T-cell (primary cell): ENCODE measurements at regions of chr12 and their contacts with region 1.

Region 1: GRCh38 chr12:113965951-113966797 is at the start of gene RBM19:
- DNase-seq: peak; percentile 93 to 99 (median 96)
- ATAC-seq: peak; percentile 97 to 99 (median 99)
- H3K4me3 ChIP-seq: peak within 1 kb of the TSS; percentile 89 to 99
- H3K4me3 Mint-ChIP-seq: peak within 1 kb of the TSS; percentile 93 to 99 (median 94)
- H3K27ac ChIP-seq: peak within 1 kb of the TSS; percentile 46
- H3K27ac Mint-ChIP-seq: peak within 1 kb of the TSS; percentile 84 to 92
- H3K4me1 ChIP-seq: peaks cover 9 to 18% of the 10 kb centered on the region in 2 experiments
- H3K4me1 Mint-ChIP-seq: peaks cover 46 to 55% (median 52%) of the 10 kb centered on the region in 3 donors
- H3K27me3 ChIP-seq: peaks cover 2 to 6% of the 10 kb centered on the region in 2 experiments
- H3K27me3 Mint-ChIP-seq: peaks cover 3 to 10% of the 10 kb centered on the region in 2 donors
- total RNA-seq, gene RBM19: 57.9 to 80.3 (median 78.3) TPM

Region 2: DNA sequence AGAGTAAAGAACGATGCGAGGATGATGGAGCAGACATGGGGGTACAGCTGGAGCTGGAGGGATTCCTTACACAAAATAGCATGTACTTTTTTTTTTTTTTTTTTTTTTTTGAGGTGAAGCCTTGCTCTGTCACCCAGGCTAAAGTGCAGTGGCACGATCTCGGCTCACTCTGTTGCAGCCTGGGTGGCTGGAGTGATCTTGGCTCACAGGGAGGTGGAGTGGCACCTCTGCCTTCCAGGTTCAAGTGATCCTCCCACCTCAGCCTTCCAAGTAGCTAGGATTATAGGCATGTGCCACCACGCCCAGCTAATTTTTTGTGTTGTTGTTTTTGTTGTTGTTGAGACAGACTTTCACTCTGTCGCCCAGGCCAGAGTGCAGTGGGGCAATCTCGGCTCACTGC is 825.5 kb before region 1 on chr12:
- CTCF ChIA-PET with region 1: no interaction called
- POLR2A ChIA-PET with region 1: interaction called in 1 of 2 experiments, 10 read pairs
- DNase-seq: no peak
- ATAC-seq: no peak
- H3K4me3 ChIP-seq: no peak overlapping the region
- H3K4me3 Mint-ChIP-seq: no peak overlapping the region
- H3K27ac ChIP-seq: no peak overlapping the region
- H3K27ac Mint-ChIP-seq: no peak overlapping the region
- H3K4me1 ChIP-seq: peaks cover 0 to 10% of the 10 kb centered on the region in 2 experiments
- H3K4me1 Mint-ChIP-seq: peaks cover 12 to 13% (median 12%) of the 10 kb centered on the region in 3 donors
- H3K27me3 ChIP-seq: peaks cover 0 to 26% of the 10 kb centered on the region in 2 experiments
- H3K27me3 Mint-ChIP-seq: peaks cover 0 to 4% of the 10 kb centered on the region in 2 donors

Region 3: GRCh38 chr12:114508529-114509129 is 542.5 kb after region 1 on chr12:
- CTCF ChIA-PET with region 1: interaction called, 6 to 18 read pairs
- POLR2A ChIA-PET with region 1: no interaction called
- DNase-seq: peak in 33 of 35 experiments; percentile 6 to 71 (median 38)
- ATAC-seq: peak in 3 of 4 experiments; percentile 41 to 55 (median 46)
- H3K4me3 ChIP-seq: no peak overlapping the region
- H3K4me3 Mint-ChIP-seq: no peak overlapping the region
- H3K27ac ChIP-seq: no peak overlapping the region
- H3K27ac Mint-ChIP-seq: no peak overlapping the region
- H3K4me1 ChIP-seq: no peaks in the 10 kb centered on the region
- H3K4me1 Mint-ChIP-seq: no peaks in the 10 kb centered on the region
- H3K27me3 ChIP-seq: no peaks in the 10 kb centered on the region
- H3K27me3 Mint-ChIP-seq: peaks cover 11 to 20% of the 10 kb centered on the region in 2 donors